ENCODE measurements at regions of chr1 and their contacts with region 1.

Region 1: GRCh38 chr1:6634371-6635052 is 9.8 kb downstream of the THAP3 start:
- DNase-seq: peak in 19 of 35 experiments; percentile 10 to 53 (median 32)
- ATAC-seq: peak; percentile 47 to 72 (median 67)
- H3K4me3 ChIP-seq: no peak overlapping the region
- H3K4me3 Mint-ChIP-seq: no peak overlapping the region
- H3K27ac ChIP-seq: no peak overlapping the region
- H3K27ac Mint-ChIP-seq: no peak overlapping the region
- H3K4me1 ChIP-seq: no peaks in the 10 kb centered on the region
- H3K4me1 Mint-ChIP-seq: peaks cover 0 to 2% (median under 1%) of the 10 kb centered on the region in 3 donors
- H3K27me3 ChIP-seq: no peaks in the 10 kb centered on the region
- H3K27me3 Mint-ChIP-seq: no peaks in the 10 kb centered on the region

Region 2: DNA sequence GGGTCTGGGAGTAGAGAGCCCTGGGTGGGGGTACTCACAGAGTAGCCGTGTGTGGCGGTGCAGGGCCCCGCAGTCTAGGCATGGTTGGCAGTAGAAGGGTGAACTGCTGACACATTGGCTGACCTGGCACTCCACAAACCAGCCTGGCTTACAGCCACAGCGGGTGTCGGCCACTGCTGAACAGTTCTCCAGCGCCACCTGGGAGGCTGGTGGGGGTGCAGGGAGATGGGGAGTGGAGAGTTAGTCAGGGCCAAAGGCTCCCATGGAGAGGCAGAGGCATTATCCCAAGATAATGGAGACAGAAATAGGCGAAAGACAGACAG is 170.0 kb before region 1 on chr1:
- CTCF ChIA-PET with region 1: no interaction called
- POLR2A ChIA-PET with region 1: interaction called in 1 of 2 experiments, 12 read pairs
- DNase-seq: peak in 5 of 35 experiments; percentile 34 to 64 (median 54)
- ATAC-seq: no peak
- H3K4me3 ChIP-seq: peak overlapping the region; percentile 87 to 90
- H3K4me3 Mint-ChIP-seq: peak overlapping the region; percentile 91 to 97 (median 92)
- H3K27ac ChIP-seq: peak overlapping the region; percentile 93
- H3K27ac Mint-ChIP-seq: peak overlapping the region; percentile 92 to 97
- H3K4me1 ChIP-seq: peaks cover 33 to 76% of the 10 kb centered on the region in 2 experiments
- H3K4me1 Mint-ChIP-seq: peaks cover 43 to 58% (median 48%) of the 10 kb centered on the region in 3 donors
- H3K27me3 ChIP-seq: peaks cover 0 to 12% of the 10 kb centered on the region in 2 experiments
- H3K27me3 Mint-ChIP-seq: no peaks in the 10 kb centered on the region

Region 3: DNA sequence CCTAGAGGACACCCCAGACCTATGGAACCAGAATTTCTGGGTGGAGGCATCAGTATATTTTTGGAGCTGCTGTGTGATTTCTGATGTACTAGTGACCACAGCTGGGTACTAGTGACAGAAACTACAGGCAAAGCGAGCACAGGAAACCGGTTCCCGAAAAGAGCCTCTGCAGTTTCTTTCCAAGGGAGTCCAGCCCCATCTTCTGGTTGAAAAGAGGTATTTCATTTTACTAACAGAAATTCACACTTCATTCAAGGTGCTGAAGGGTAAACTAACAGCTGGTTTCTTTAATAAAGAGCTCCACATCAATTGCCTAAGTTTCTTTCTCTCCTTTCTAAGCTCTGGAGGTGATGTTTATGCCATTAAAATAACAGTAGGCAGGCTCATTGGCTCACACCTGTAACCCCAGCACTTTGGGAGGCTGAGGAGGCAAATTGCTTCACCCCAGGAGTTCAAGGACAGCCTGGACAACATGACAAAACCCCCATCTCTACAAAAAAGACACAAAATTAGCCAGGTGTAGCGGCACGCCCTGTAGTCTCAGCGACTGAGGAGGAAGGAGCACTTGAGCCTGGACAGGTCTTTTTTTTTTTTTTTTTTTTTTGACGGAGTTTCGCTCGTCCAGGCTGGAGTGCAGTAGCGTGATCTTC is 12.1 kb after region 1 on chr1:
- CTCF ChIA-PET with region 1: interaction called in 1 of 2 experiments, 10 read pairs
- POLR2A ChIA-PET with region 1: no interaction called
- DNase-seq: peak in 22 of 35 experiments; percentile 5 to 66 (median 22)
- ATAC-seq: peak; percentile 48 to 58 (median 55)
- H3K4me3 ChIP-seq: no peak overlapping the region
- H3K4me3 Mint-ChIP-seq: no peak overlapping the region
- H3K27ac ChIP-seq: no peak overlapping the region
- H3K27ac Mint-ChIP-seq: no peak overlapping the region
- H3K4me1 ChIP-seq: no peaks in the 10 kb centered on the region
- H3K4me1 Mint-ChIP-seq: no peaks in the 10 kb centered on the region
- H3K27me3 ChIP-seq: no peaks in the 10 kb centered on the region
- H3K27me3 Mint-ChIP-seq: no peaks in the 10 kb centered on the region